Esophagus muscularis mucosa (tissue), 4 donors: ENCODE measurements at regions of chr3 and their contacts with region 1.

Region 1: DNA sequence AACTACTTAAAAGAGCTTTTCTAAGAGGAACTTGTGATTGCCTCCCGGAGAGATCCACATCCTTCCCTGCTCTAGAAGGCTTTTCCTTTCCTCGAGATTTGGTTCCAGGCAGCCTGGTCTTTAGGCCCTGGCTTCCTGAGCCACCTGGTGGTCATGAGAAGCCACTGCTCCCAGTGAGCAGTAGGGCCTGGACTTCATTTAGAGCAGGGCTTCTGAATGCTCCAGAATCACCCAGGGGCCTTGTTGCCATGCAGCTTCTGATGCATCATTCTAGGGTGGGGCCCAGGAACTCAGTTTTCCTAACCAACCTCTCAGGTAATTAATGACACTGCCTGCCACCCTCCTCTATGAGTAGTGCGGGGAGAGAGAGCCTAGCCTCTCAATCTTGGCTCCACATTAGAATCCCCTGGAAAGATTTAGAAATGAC is 29.6 kb downstream of the PSMD6 start:
- DNase-seq: no peak
- H3K4me3 ChIP-seq: no peak overlapping the region
- H3K27ac ChIP-seq: no peak overlapping the region
- H3K4me1 ChIP-seq: peaks cover 0 to 19% (median 7%) of the 10 kb centered on the region in 4 donors
- H3K27me3 ChIP-seq: no peaks in the 10 kb centered on the region
- CTCF ChIP-seq: peak in 2 of 3 experiments; percentile 93 to 97
- EP300 ChIP-seq: no peak
- POLR2A ChIP-seq: no peak

Region 2: DNA sequence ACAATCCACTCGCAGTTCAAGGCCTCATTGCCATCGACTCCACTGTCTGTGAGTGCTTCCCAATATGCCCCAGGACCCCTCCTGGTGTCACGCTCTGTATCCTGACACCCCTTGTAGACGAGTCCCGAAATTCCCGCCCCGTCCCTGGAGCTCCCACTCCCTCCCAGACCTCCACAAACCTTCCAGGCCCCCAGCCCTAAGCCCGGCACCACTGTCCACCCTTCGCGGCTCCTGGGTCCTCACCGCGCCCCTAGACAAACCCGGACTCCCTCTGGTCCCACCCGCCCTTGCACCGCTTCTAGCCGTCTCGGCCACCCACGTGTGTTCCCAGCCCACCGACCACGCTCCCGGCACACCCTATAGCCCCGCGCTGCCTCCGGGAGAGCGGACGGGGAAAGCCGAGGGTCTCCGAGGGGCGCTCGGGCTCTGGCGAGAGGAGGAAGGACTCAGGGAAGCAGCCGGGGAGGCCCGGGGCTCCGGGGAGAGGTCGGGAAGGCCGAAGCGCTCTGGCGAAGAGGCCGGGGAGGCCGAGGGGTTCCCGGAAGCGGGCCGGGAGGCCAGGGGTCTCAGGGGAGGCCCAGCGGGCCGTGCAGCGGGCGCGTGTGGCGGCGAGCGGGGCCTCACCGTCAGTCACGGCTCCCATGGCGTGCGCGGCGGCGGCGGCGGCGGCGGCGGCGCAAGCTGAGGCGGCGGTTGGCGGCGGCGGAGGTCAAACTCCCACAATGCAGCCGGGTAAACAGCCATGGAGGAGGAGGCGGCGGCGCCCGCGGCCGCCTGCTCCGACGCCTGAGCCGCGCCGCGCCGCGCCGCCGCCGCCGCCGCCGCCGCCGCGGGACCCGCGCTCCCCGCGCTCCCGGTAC is 130.3 kb before region 1 on chr3 and contains the starts of genes ATXN7 and THOC7:
- intact Hi-C with region 1: loop called (anchors 10 kb)
- DNase-seq: no peak
- H3K4me3 ChIP-seq: peak within 1 kb of the TSS; percentile 81 to 100 (median 98)
- H3K27ac ChIP-seq: peak within 1 kb of the TSS; percentile 88 to 94 (median 90)
- H3K4me1 ChIP-seq: peaks cover 9 to 46% (median 33%) of the 10 kb centered on the region in 4 donors
- H3K27me3 ChIP-seq: no peaks in the 10 kb centered on the region
- CTCF ChIP-seq: no peak
- EP300 ChIP-seq: no peak
- POLR2A ChIP-seq: no peak
- total RNA-seq, gene ATXN7: 20.9 to 28.2 (median 22.6) TPM
- total RNA-seq, gene THOC7: 66.0 to 102 (median 78.8) TPM

Region 3: DNA sequence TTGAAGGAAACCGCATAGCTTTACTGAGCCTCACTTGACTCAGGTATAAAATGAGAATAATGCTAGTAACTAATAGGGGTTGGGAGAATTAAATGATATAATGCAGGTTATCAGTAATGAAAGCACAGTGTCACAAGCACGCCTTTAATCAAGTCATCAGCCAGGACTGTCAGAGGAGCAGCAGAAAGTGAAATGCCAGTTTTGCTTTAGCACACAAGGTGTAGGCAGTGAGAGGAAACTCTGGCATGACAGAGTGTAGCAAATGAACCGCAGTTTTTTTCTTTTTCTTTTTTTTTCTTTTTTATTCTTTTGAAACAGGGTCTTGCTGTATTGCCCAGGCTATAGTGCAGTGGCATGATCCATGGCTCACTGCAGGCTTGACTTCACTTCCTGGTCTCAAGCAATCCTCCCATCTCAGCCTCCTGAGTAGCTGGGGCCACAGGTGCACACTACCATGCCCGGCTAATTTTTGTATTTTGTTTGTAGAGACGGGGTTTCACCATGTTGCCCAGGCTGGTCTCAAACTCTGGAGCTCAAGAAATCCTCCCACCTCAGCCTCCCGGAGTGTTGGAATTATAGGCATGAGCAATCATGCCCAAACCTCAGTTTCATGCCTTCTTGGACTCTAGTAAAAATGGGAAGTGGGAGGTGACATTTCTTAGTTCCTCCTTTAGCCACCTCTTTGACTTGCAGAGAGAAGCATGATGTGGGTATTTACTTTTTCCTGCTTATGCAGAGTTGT is 71.8 kb before region 1 on chr3:
- intact Hi-C with region 1: loop called (anchors 5 kb)
- DNase-seq: no peak
- H3K4me3 ChIP-seq: no peak overlapping the region
- H3K27ac ChIP-seq: no peak overlapping the region
- H3K4me1 ChIP-seq: peaks cover 0 to 40% (median 21%) of the 10 kb centered on the region in 4 donors
- H3K27me3 ChIP-seq: no peaks in the 10 kb centered on the region
- CTCF ChIP-seq: no peak
- EP300 ChIP-seq: no peak
- POLR2A ChIP-seq: no peak

Region 4: GRCh38 chr3:63961891-63962290 is 31.8 kb before region 1 on chr3:
- intact Hi-C with region 1: loop called (anchors 2 kb)
- DNase-seq: no peak
- H3K4me3 ChIP-seq: no peak overlapping the region
- H3K27ac ChIP-seq: peak overlapping the region in 2 of 4 donors; percentile 75 to 79
- H3K4me1 ChIP-seq: peaks cover 26 to 84% (median 78%) of the 10 kb centered on the region in 4 donors
- H3K27me3 ChIP-seq: no peaks in the 10 kb centered on the region
- CTCF ChIP-seq: peak; percentile 67 to 81 (median 67)
- EP300 ChIP-seq: no peak
- POLR2A ChIP-seq: no peak